PC-3 (cell line): ENCODE measurements at regions of chr7 and their contacts with region 1.

Region 1: GRCh38 chr7:26311798-26312197 is 20.1 kb downstream of the SNX10 start:
- DNase-seq: no peak
- ATAC-seq: no peak
- H3K4me3 ChIP-seq: no peak overlapping the region
- H3K27ac ChIP-seq: no peak overlapping the region
- H3K4me1 ChIP-seq: peaks cover 30% of the 10 kb centered on the region
- H3K27me3 ChIP-seq: no peaks in the 10 kb centered on the region
- CTCF ChIP-seq: no peak

Region 2: DNA sequence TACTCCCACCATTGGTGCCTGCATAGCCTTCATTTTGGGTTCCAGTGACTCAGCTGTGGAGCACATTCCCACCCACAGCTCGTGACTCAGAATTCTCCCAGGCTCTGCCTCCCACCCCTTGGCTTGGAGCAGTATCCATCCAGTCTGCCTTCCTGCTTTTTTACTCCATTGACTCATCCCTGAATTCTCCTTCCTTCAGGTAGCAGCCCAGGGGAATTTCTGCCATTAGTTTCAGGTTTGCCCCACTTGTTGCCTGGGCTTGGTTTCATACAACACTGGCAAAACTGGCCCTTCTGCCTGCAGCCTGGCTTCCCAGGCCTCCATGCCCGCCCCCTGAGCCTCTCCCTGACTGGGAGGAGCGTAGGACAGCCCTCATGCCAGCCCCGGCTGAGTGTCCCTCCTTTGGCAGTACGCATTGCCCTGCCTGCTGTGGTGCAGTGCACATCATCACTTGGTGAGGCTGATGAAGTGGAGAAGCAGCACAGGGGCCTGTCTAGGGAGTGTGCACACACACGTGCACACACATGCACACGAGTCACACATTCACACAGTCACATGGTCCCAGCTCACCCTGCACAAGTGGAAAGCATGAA is 34.9 kb after region 1 on chr7:
- CTCF ChIA-PET with region 1: no interaction called
- POLR2A ChIA-PET with region 1: no interaction called
- intact Hi-C with region 1: loop called (anchors 5 kb)
- DNase-seq: peak; percentile 76
- ATAC-seq: peak; percentile 73
- H3K4me3 ChIP-seq: no peak overlapping the region
- H3K27ac ChIP-seq: peak overlapping the region; percentile 73
- H3K4me1 ChIP-seq: peaks cover 27% of the 10 kb centered on the region
- H3K27me3 ChIP-seq: no peaks in the 10 kb centered on the region
- CTCF ChIP-seq: no peak